MCF 10A (cell line): ENCODE measurements at regions of chr2 and their contacts with region 1.

Region 1: GRCh38 chr2:27628767-27629709 is at the starts of genes CCDC121 and GPN1:
- DNase-seq: peak; percentile 90
- H3K4me3 Mint-ChIP-seq: no peak within 1 kb of the TSS
- H3K27ac Mint-ChIP-seq: no peak within 1 kb of the TSS
- H3K4me1 Mint-ChIP-seq: peaks cover 17% of the 10 kb centered on the region
- H3K27me3 Mint-ChIP-seq: no peaks in the 10 kb centered on the region
- CTCF ChIP-seq: no peak
- total RNA-seq, gene CCDC121: 0.61 and 2.3 TPM in 2 replicates
- total RNA-seq, gene GPN1: 28.6 and 30.5 TPM in 2 replicates

Region 2: DNA sequence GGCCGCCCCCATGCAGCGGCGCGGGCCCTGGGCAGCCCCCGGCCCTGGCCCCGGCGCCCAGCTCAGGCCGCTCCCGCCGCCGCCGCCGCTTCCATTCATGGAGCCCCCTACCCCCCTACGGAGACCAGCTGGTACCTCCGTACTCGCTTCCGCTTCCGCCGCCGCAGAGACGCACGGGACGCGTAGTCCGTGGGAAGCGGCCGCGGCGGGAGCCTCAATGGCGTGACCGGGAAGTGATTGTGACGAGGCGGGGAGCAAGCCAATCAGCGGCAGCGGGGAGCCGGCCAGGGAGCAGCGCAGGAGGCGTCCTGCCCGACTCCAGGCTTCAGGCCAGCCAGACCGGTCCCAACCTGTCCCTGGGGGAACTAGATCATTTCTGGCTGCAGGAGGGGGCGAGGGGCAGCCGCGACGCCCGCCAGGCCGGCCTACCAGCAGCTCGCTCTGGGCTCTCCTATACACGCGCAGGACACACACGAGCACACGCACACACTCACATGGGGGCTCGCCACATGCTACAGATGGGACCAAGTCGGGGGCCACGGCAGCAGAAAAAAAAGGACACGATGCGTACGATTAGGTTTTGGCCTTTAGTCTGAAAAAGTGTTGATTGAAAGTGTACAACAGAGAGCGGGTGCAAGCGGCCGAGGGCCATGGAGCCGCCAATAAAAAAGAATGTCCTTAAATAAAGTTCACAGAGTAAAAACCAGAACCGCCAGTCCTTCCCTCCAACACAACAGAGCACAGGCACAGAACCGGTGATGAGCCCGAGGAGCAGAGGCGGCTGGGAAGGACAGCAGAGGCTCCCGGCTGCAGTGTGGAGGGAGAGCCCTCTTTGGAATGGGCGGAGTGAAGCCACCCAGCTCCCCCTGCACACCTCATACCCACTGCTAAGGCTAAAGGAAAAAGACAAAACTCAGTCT is 248.2 kb before region 1 on chr2 and contains the start of gene ZNF513:
- CTCF ChIA-PET with region 1: no interaction called
- POLR2A ChIA-PET with region 1: interaction called, 12 read pairs
- intact Hi-C with region 1: no loop called
- DNase-seq: peak; percentile 95
- H3K4me3 Mint-ChIP-seq: peak within 1 kb of the TSS; percentile 84
- H3K27ac Mint-ChIP-seq: peak within 1 kb of the TSS; percentile 93
- H3K4me1 Mint-ChIP-seq: peaks cover 20% of the 10 kb centered on the region
- H3K27me3 Mint-ChIP-seq: no peaks in the 10 kb centered on the region
- CTCF ChIP-seq: no peak
- total RNA-seq, gene ZNF513: 14.8 and 16.2 TPM in 2 replicates

Region 3: GRCh38 chr2:27441958-27442919 is 186.8 kb before region 1 on chr2 and contains the start of gene KRTCAP3:
- CTCF ChIA-PET with region 1: interaction called, 4 read pairs
- POLR2A ChIA-PET with region 1: interaction called, 11 read pairs
- intact Hi-C with region 1: no loop called
- DNase-seq: peak; percentile 35
- H3K4me3 Mint-ChIP-seq: no peak within 1 kb of the TSS
- H3K27ac Mint-ChIP-seq: peak within 1 kb of the TSS; percentile 12
- H3K4me1 Mint-ChIP-seq: peaks cover 9% of the 10 kb centered on the region
- H3K27me3 Mint-ChIP-seq: no peaks in the 10 kb centered on the region
- CTCF ChIP-seq: no peak
- total RNA-seq, gene KRTCAP3: 4.1 and 6.9 TPM in 2 replicates

Region 4: GRCh38 chr2:27582695-27583389 is 46.2 kb before region 1 on chr2 and contains the start of gene ZNF512:
- CTCF ChIA-PET with region 1: no interaction called
- POLR2A ChIA-PET with region 1: interaction called, 10 read pairs
- intact Hi-C with region 1: no loop called
- DNase-seq: peak; percentile 94
- H3K4me3 Mint-ChIP-seq: peak within 1 kb of the TSS; percentile 97
- H3K27ac Mint-ChIP-seq: peak within 1 kb of the TSS; percentile 97
- H3K4me1 Mint-ChIP-seq: peaks cover 39% of the 10 kb centered on the region
- H3K27me3 Mint-ChIP-seq: no peaks in the 10 kb centered on the region
- CTCF ChIP-seq: no peak
- total RNA-seq, gene ZNF512: 19.9 and 25.5 TPM in 2 replicates

Region 5: GRCh38 chr2:27683390-27684071 is 54.5 kb after region 1 on chr2:
- CTCF ChIA-PET with region 1: interaction called, 9 read pairs
- POLR2A ChIA-PET with region 1: interaction called, 16 read pairs
- intact Hi-C with region 1: no loop called
- DNase-seq: peak; percentile 94
- H3K4me3 Mint-ChIP-seq: peak overlapping the region; percentile 35
- H3K27ac Mint-ChIP-seq: peak overlapping the region; percentile 59
- H3K4me1 Mint-ChIP-seq: peaks cover 29% of the 10 kb centered on the region
- H3K27me3 Mint-ChIP-seq: no peaks in the 10 kb centered on the region
- CTCF ChIP-seq: peak; percentile 99